Heart right ventricle (tissue), 16 donors: ENCODE measurements at regions of chr5 and their contacts with region 1.

Region 1: DNA sequence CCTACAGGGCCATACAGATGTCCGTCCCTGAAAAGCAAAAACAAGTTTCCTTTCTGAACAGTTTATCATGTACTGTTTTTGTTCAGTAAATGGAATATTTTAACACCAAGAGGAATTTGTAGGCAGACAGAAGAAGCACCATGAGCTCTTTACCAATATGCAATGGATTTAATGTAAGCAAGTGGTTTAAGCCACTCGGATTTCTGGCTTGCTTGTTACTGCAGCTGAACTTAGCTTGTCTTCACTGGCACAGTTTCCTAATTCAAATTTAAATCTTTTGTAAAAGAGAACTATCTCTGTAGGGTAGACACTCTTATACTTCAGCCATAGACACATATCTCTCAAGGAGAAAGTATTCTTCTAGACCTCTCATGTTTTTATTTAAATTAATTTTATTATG is 12.7 kb upstream of the EBF1 start:
- DNase-seq: no peak
- ATAC-seq: no peak
- H3K4me3 ChIP-seq: no peak overlapping the region
- H3K27ac ChIP-seq: no peak overlapping the region
- H3K4me1 ChIP-seq: no peaks in the 10 kb centered on the region
- H3K27me3 ChIP-seq: peaks cover 0 to 24% (median 8%) of the 10 kb centered on the region in 7 donors
- CTCF ChIP-seq: no peak

Region 2: DNA sequence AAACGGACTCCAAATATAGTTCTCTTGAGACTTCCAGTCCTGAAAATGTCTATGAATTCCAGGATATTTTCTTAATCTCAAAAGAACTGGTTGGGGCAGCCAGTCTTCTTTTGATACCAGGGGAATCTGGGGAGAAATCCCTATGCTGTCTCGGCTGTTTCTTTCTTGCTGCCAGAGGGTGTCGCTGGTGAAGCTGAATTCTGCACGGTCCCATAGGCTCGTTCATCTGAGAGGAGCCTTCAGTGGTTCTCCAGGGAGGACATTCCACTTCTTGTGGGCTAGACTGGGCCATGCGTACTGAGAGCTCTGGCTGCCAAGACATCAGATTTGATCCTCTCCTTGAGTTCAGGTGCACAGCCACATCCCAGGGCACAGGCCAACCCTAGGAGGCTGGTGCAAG is 1098.5 kb before region 1 on chr5:
- intact Hi-C with region 1: loop called in 3 of 10 experiments (anchors 10 kb)
- DNase-seq: peak in 1 of 2 donors; percentile 32
- ATAC-seq: peak in 6 of 8 donors; percentile 47 to 71 (median 56)
- H3K4me3 ChIP-seq: no peak overlapping the region
- H3K27ac ChIP-seq: no peak overlapping the region
- H3K4me1 ChIP-seq: peaks cover 0 to 5% (median 0%) of the 10 kb centered on the region in 9 donors
- H3K27me3 ChIP-seq: peaks cover 0 to 4% (median 0%) of the 10 kb centered on the region in 7 donors
- CTCF ChIP-seq: peak in 7 of 9 donors; percentile 26 to 57 (median 44)

Region 3: DNA sequence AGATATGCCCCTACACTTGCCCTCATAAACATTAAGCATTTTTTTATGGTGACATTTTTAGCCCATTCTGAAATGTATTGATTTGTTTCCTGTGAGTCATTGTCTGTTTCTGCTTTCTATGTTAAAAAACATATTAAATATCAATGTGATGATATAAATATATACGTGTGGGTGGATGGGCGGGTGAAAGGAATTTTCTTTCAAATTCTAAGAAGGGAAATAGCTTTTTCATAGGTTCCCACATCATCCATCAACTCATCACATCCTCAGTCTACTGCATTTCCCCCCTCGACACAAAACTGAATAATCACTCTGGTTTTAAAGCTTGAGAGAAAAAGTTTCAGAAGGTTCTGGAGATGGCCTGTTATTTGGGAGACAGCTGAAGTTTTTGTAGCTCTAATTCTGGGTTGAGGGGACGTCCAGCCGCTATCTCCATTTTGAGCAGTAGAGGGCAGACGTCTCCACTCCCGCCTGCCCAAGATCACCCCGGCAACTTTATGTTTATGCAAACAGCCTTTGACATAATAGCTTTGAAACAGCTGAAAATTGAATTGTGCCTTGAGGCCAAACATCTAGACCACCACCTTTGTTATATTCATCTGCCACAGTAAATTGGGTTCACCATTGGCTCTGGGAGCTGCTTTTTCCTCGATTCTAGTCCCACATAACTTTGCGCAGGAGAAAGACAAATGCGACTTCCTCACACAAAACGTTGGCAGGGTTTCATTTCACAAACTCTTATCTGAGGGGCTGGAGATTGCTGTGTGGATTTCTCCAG is 1037.3 kb before region 1 on chr5:
- intact Hi-C with region 1: loop called in 9 of 10 experiments (anchors 2 to 10 kb)
- DNase-seq: peak; percentile 28 to 62
- ATAC-seq: peak; percentile 59 to 92 (median 82)
- H3K4me3 ChIP-seq: peak overlapping the region in 8 of 10 donors; percentile 17 to 43 (median 32)
- H3K27ac ChIP-seq: peak overlapping the region in 8 of 10 donors; percentile 15 to 78 (median 52)
- H3K4me1 ChIP-seq: peaks cover 0 to 16% (median 3%) of the 10 kb centered on the region in 9 donors
- H3K27me3 ChIP-seq: no peaks in the 10 kb centered on the region
- CTCF ChIP-seq: peak; percentile 67 to 92 (median 85)

Region 4: GRCh38 chr5:159021901-159022556 is 90.4 kb before region 1 on chr5:
- intact Hi-C with region 1: no loop called
- DNase-seq: peak; percentile 56 to 67
- ATAC-seq: peak; percentile 68 to 82 (median 78)
- H3K4me3 ChIP-seq: peak overlapping the region in 7 of 10 donors; percentile 9 to 26 (median 16)
- H3K27ac ChIP-seq: peak overlapping the region in 9 of 10 donors; percentile 19 to 78 (median 67)
- H3K4me1 ChIP-seq: peaks cover 10 to 85% (median 49%) of the 10 kb centered on the region in 9 donors
- H3K27me3 ChIP-seq: no peaks in the 10 kb centered on the region
- CTCF ChIP-seq: no peak

Region 5: GRCh38 chr5:159135896-159136531 is 23.6 kb after region 1 on chr5:
- intact Hi-C with region 1: no loop called
- DNase-seq: no peak
- ATAC-seq: no peak
- H3K4me3 ChIP-seq: no peak overlapping the region
- H3K27ac ChIP-seq: no peak overlapping the region
- H3K4me1 ChIP-seq: no peaks in the 10 kb centered on the region
- H3K27me3 ChIP-seq: peaks cover 0 to 24% (median 9%) of the 10 kb centered on the region in 7 donors
- CTCF ChIP-seq: no peak